BJ (cell line): ENCODE measurements at regions of chr10 and their contacts with region 1.

Region 1: DNA sequence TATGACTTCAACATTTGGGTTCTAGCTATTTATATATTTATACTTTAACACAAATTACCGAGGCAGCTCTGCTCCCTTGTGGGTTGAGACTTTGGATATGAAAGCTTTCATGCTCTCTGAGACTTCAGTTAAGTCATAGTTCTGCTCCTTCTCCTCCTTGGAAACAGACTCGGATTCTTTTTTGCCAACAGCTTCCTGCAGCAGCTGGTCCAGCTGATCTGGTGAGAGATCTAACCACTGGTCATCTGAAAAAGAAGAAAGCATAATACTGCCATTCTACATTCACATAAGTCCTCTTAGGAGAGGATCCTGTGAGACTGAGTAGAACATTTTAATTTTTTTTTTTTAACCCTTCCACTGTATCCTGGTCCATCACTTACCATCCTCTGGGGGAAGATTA is 28.6 kb downstream of the ECD start:
- DNase-seq: no peak
- H3K4me3 ChIP-seq: no peak overlapping the region
- H3K27me3 ChIP-seq: no peaks in the 10 kb centered on the region
- CTCF ChIP-seq: no peak

Region 2: DNA sequence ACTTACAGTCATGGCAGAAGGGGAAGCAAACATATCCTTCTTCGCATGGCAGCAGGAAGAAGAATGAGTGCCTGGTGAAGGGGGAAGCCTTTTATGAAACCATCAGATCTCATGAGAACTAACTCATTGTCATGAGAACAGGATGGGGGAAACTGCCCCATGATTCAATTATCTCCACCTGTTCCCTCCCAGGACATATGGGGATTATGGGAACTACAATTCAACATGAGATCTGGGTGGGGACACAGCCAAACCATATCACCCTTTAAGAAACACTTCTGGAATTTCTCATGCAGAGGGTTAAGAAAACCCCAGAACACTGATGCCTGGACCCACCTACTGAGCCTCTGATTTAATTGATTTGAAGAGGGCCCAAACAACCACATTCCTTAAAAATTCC is 721.3 kb before region 1 on chr10:
- CTCF ChIA-PET with region 1: no interaction called
- POLR2A ChIA-PET with region 1: no interaction called
- DNase-seq: no peak
- H3K4me3 ChIP-seq: no peak overlapping the region
- H3K27me3 ChIP-seq: no peaks in the 10 kb centered on the region
- CTCF ChIP-seq: no peak

Region 3: DNA sequence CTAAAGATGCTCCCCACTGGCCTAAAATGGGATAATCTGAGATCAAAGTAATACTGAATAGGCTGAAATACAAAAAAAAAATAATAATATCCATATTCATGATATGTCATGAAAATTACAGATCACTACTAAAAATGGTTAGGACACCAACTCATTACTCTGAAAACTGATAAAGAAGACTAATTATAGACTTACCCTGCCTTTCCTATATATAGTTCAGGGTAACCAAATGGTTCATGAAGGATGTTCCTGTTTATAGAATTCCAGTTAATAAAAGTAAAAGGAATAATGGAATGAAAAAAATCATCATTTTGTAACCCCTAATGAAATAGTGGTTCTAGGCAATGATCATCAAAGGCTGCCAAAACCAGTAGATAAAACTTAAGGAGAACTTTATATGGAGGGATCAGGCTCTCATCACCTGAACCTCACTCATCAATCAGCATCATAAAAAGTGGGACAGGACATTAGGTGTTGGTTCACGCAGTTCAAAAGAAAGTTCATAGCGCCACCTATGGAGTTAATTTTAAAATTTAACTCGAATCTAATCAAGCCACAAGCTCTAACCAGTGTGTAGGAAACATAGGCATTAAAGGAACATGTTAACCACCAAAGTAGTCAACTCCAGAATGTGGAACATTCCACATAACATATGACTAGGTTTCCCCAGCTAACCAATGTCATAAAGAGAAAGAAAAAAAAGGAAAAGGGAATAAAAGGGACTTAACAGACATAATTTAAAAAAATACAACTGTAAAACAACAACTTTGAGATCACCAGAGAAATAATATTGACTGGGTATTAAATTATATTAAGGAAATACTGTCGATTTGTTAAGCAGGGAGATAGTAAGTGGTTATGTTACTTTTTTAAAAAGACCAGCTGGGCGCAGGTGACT is 78.3 kb before region 1 on chr10:
- CTCF ChIA-PET with region 1: no interaction called
- POLR2A ChIA-PET with region 1: no interaction called
- DNase-seq: no peak
- H3K4me3 ChIP-seq: no peak overlapping the region
- H3K27me3 ChIP-seq: no peaks in the 10 kb centered on the region
- CTCF ChIP-seq: peak; percentile 38; the same call in 1 of the 2 replicates

Region 4: DNA sequence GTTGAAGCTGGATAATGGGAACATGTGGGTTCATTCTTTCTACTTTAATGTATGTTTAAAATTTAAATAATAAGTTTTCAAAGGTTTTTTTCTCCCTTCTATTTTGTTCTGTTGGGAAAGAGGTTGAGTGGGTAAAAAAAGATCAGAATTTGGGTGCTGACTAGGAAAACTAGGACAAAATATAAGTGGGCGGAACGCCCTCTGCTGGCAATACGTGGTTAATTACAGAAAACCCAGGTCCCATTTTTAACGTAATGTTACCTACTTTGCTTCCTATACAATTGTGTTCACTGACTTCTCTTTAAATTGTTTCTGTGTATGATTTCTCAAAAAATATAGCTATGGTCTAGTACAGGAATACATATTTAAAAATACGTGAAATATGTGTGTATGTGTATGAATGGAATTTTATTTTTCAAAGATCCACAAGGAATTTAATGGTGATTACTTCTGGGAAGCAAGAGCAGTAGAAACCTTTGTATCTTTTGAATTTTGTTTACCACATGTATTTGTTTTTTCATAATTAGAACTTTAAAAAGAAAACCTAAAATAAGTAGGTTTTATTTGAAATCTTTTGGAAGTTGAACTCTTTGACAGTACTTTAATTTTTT is 19.9 kb after region 1 on chr10:
- CTCF ChIA-PET with region 1: interaction called, 10 read pairs
- POLR2A ChIA-PET with region 1: no interaction called
- DNase-seq: no peak
- H3K4me3 ChIP-seq: no peak overlapping the region
- H3K27me3 ChIP-seq: no peaks in the 10 kb centered on the region
- CTCF ChIP-seq: peak; percentile 73

Region 5: GRCh38 chr10:73339436-73339835 is 200.2 kb after region 1 on chr10:
- CTCF ChIA-PET with region 1: no interaction called
- POLR2A ChIA-PET with region 1: no interaction called
- DNase-seq: no peak
- H3K4me3 ChIP-seq: no peak overlapping the region
- H3K27me3 ChIP-seq: no peaks in the 10 kb centered on the region
- CTCF ChIP-seq: no peak